ENCODE measurements at regions of chr5 and their contacts with region 1.

Region 1: GRCh38 chr5:140357726-140358093 is 2.3 kb upstream of the SLC4A9 start:
- DNase-seq: peak; percentile 76
- ATAC-seq: peak; percentile 94
- H3K4me3 ChIP-seq: peak overlapping the region; percentile 13 to 30; a peak in 3 of 4 replicates
- H3K27ac ChIP-seq: no peak overlapping the region
- H3K4me1 ChIP-seq: peaks cover 0 to 21% of the 10 kb centered on the region in 2 experiments; a peak in 2 of 4 replicates
- H3K27me3 ChIP-seq: no peaks in the 10 kb centered on the region
- CTCF ChIP-seq: peak in 2 of 3 experiments; percentile 91 to 92; a peak in 4 of 6 replicates
- POLR2A ChIP-seq: no peak
- RAD21 ChIP-seq: no peak

Region 2: GRCh38 chr5:139197710-139198669 is 1159.7 kb before region 1 on chr5 and contains the start of gene SIL1:
- CTCF ChIA-PET with region 1: no interaction called
- POLR2A ChIA-PET with region 1: no interaction called
- RAD21 ChIA-PET with region 1: no interaction called
- intact Hi-C with region 1: no loop called
- DNase-seq: peak; percentile 82
- ATAC-seq: peak; percentile 98
- H3K4me3 ChIP-seq: peak within 1 kb of the TSS; percentile 81 to 96
- H3K27ac ChIP-seq: peak within 1 kb of the TSS; percentile 80
- H3K4me1 ChIP-seq: peaks cover 7 to 13% of the 10 kb centered on the region in 2 experiments; a peak in 3 of 4 replicates
- H3K27me3 ChIP-seq: no peaks in the 10 kb centered on the region
- CTCF ChIP-seq: no peak
- POLR2A ChIP-seq: peak; percentile 83
- RAD21 ChIP-seq: no peak
- total RNA-seq, gene SIL1: 34.0 TPM

Region 3: DNA sequence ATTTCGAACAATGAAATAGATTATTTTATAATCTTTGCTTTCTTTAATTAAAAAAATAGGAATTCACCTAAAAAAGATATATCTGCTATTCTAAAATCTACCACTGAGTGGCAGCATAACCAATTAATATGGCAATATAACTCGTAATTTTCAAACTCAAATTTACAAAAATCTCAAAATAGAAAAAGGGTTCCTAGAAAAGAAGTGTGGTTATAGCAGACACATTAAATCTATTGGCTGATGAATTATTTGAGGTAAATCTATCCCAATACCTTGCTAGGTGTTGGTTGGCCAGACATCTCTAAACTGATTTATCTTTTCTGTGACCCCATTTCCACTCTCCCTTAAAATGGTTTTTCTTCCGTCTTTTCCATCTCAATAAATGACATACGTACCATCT is 284.4 kb before region 1 on chr5:
- CTCF ChIA-PET with region 1: interaction called, 4 read pairs
- POLR2A ChIA-PET with region 1: no interaction called
- RAD21 ChIA-PET with region 1: no interaction called
- intact Hi-C with region 1: loop called (anchors 10 kb)
- DNase-seq: no peak
- ATAC-seq: no peak
- H3K4me3 ChIP-seq: no peak overlapping the region
- H3K27ac ChIP-seq: no peak overlapping the region
- H3K4me1 ChIP-seq: 0 out of 4 replicates have a peak, but pooled peaks cover 0 to 4% of the 10 kb centered on the region in 2 experiments
- H3K27me3 ChIP-seq: no peaks in the 10 kb centered on the region
- CTCF ChIP-seq: peak; percentile 36 to 79 (median 68)
- POLR2A ChIP-seq: no peak
- RAD21 ChIP-seq: peak; percentile 78

Region 4: DNA sequence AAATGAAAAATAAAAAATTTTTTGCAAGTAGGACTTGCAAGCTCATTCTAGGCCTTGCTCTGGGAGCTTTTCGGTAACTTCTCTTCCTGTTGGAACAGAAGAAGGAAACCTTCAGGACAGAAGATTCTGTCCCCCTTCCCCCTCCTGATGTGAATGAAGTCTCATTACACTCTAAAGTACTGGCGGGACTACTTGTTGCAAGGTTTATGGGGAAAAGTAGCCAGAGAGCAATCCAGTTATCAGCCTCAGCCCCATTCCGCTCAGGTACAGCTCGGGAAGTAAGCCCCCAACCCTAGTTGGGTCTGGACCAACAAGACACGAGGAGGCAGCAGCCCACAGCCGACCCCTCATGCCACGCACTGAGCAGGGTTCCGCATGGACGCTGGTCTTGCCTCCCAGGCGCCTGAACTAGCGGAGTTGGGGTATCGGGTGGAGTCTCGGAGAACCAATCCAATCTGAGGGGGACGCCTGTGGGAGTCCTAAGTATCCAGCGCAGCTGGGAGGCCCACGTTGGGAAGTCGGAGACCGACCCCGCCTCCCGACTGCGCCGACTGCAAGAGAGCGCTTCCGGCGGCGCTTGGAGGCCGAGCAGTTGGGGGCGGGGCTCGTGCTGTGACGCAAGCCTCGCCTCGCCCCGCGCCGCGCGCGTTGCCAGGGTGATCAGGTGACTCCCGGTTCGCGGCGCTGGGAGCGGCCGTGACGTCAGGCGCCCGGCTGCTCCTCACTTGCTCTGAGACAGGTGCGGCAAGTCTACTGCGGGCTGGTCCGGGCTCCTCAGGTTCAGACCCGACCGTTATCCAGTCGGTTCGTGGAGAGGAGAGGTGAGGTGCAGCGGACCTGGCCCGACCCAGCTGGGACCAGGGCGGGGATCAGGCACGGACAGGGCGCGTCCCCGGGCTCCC is 183.0 kb before region 1 on chr5 and contains the start of gene CYSTM1:
- CTCF ChIA-PET with region 1: interaction called, 7 read pairs
- POLR2A ChIA-PET with region 1: no interaction called
- RAD21 ChIA-PET with region 1: interaction called in 1 of 2 experiments, 4 read pairs
- intact Hi-C with region 1: loop called (anchors 2 kb)
- DNase-seq: peak; percentile 94
- ATAC-seq: peak; percentile 91
- H3K4me3 ChIP-seq: peak within 1 kb of the TSS; percentile 88 to 95
- H3K27ac ChIP-seq: peak within 1 kb of the TSS; percentile 93
- H3K4me1 ChIP-seq: peaks cover 15 to 29% of the 10 kb centered on the region in 2 experiments
- H3K27me3 ChIP-seq: no peaks in the 10 kb centered on the region
- CTCF ChIP-seq: no peak
- POLR2A ChIP-seq: peak; percentile 87
- RAD21 ChIP-seq: 0 out of 2 replicates have a peak, but pooled peaks have one; percentile 28
- total RNA-seq, gene CYSTM1: 56.0 TPM

Region 5: GRCh38 chr5:140261403-140262171 is 96.1 kb before region 1 on chr5:
- CTCF ChIA-PET with region 1: interaction called, 11 read pairs
- POLR2A ChIA-PET with region 1: no interaction called
- RAD21 ChIA-PET with region 1: no interaction called
- intact Hi-C with region 1: no loop called
- DNase-seq: peak; percentile 79
- ATAC-seq: peak; percentile 96
- H3K4me3 ChIP-seq: peak overlapping the region in 1 of 2 experiments; percentile 16; a peak in 2 of 4 replicates
- H3K27ac ChIP-seq: peak overlapping the region; percentile 38; the same call in 1 of the 2 replicates
- H3K4me1 ChIP-seq: peaks cover 27 to 48% of the 10 kb centered on the region in 2 experiments
- H3K27me3 ChIP-seq: no peaks in the 10 kb centered on the region
- CTCF ChIP-seq: 0 out of 6 replicates have a peak, but pooled peaks of 2 of the 3 experiments have one; percentile 3 to 10
- POLR2A ChIP-seq: no peak
- RAD21 ChIP-seq: peak; percentile 32

Region 6: DNA sequence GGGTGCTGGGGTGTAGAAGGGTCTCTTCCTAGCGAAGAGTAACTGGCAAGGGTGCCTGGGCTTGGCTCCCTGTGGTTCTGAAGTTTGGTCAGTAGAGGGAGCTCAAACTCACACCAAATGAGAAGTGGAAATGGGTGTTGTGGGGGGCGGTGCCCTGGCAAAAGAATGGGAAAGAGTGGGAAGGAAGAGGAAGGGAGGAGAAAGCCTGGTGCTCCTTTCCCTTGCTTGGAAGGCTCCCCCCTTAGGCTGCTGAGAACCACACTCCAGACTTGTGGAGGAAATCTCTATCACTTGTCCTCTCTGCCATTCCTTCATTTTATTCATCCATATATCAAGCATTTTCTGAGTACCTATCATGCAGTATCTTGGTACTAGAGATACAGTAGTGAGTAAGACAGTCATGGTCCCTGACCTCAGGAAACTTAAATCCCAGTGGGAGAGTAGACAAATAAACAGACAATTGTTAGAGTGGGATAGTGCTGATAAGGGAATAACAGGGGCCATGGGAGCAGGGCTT is 15.3 kb after region 1 on chr5:
- CTCF ChIA-PET with region 1: interaction called, 28 read pairs
- POLR2A ChIA-PET with region 1: no interaction called
- RAD21 ChIA-PET with region 1: no interaction called
- intact Hi-C with region 1: no loop called
- DNase-seq: peak; percentile 71
- ATAC-seq: peak; percentile 94
- H3K4me3 ChIP-seq: no peak overlapping the region
- H3K27ac ChIP-seq: no peak overlapping the region
- H3K4me1 ChIP-seq: peaks cover 5 to 10% of the 10 kb centered on the region in 2 experiments; a peak in 3 of 4 replicates
- H3K27me3 ChIP-seq: no peaks in the 10 kb centered on the region
- CTCF ChIP-seq: peak; percentile 68 to 88 (median 80); a peak in 5 of 6 replicates
- POLR2A ChIP-seq: no peak
- RAD21 ChIP-seq: peak; percentile 93

Region 7: DNA sequence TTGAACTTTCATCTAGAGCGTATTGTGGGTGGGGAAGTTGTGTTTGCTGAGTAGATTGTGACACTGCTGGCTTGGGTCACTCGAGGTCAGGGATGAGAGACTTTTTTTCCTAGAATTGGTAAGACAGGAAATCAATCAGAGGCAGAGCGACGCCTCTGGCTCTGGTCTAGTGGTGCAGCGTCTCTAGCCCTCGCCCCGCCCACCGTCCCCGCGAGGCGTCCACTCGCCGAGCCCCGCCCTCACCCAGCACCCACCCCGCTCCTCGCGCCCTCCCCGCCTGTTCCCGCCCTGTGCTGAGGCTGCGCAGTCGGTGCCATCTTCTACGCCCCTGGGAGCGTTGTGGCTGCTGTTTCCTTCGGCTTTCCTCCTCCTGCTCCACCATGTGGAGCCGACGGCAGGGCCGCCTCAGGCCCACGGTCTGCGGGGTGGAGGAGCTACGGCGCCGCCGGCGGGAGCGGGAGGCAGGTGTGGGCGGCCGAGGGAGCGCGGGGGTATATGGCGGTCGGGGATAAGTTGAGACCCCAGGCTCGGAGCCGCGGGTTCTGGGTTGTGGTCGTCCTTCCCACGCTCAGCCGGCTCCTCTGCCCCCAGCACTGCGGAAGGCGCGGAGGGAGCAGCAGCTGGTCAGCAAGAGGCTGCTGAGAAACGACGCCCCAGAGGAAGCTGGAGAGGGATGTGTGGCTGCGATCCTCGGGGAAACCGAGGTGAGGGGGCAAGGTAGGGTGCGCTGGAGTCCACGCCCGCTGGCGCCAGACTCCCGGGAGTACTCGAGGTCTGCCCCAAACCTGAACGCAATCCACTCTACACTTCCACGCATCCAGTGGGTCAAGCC is 281.7 kb after region 1 on chr5 and contains the start of gene TMCO6:
- CTCF ChIA-PET with region 1: interaction called, 6 read pairs
- POLR2A ChIA-PET with region 1: no interaction called
- RAD21 ChIA-PET with region 1: no interaction called
- intact Hi-C with region 1: loop called (anchors 5 kb)
- DNase-seq: peak; percentile 73
- ATAC-seq: peak; percentile 94
- H3K4me3 ChIP-seq: peak within 1 kb of the TSS; percentile 80 to 88
- H3K27ac ChIP-seq: peak within 1 kb of the TSS; percentile 84
- H3K4me1 ChIP-seq: peaks cover 4 to 11% of the 10 kb centered on the region in 2 experiments; a peak in 3 of 4 replicates
- H3K27me3 ChIP-seq: no peaks in the 10 kb centered on the region
- CTCF ChIP-seq: peak in 2 of 3 experiments; percentile 57; a peak in 4 of 6 replicates
- POLR2A ChIP-seq: peak; percentile 68
- RAD21 ChIP-seq: no peak
- total RNA-seq, gene TMCO6: 28.0 TPM

Region 8: GRCh38 chr5:140718241-140718580 is 360.5 kb after region 1 on chr5:
- CTCF ChIA-PET with region 1: interaction called, 27 read pairs
- POLR2A ChIA-PET with region 1: interaction called, 3 read pairs
- RAD21 ChIA-PET with region 1: no interaction called
- intact Hi-C with region 1: loop called (anchors 2 kb)
- DNase-seq: no peak
- ATAC-seq: peak; percentile 4
- H3K4me3 ChIP-seq: peak overlapping the region in 1 of 2 experiments; percentile 42; a peak in 1 of 4 replicates
- H3K27ac ChIP-seq: peak overlapping the region; percentile 80
- H3K4me1 ChIP-seq: peaks cover 12 to 28% of the 10 kb centered on the region in 2 experiments
- H3K27me3 ChIP-seq: no peaks in the 10 kb centered on the region
- CTCF ChIP-seq: no peak
- POLR2A ChIP-seq: no peak
- RAD21 ChIP-seq: no peak

Measured in HCT116 (cell line).